Posterior vena cava (tissue), 2 donors: ENCODE measurements at regions of chr5 and their contacts with region 1.

Region 1: DNA sequence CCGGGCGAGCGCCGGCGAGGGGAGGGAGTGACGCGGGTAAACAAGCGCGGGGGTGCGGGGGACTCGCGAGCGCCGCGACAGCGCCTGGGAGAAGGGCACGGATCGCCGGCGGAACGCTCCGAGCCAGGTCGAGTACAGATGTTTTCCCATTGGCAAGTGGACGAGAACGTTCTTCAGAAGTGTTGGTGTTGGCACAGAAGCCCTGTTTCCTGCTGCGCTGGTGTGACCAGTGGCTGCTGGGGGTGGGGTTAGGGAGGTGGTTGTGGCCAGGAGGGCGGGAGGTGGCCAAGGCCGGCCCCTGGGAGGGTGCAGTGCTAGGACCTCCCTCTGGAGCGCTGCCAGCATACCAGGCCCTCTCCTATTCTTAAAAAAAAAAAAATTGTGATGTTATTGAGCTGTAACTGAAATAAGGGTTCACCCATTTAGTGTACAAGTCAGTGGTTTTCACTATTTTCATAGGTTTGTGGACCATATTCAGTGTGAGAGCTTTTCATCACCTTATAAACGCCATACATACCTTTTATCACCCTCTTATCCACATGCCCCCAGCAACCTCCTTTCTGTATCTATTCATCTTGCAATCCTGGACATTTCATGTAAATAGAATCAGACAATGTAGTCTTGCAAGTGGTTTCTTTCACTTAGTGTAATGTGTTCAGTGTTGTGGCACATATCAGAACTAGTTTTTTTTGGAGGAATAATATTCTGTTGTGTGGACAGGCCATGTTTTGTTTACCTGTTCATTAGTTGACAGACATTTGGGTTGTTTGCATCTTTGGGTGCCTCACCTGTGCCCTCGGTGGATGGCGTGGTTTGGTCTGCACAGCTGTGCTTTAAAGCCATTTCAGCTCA is 1.1 kb downstream of the SQSTM1 start:
- DNase-seq: peak; percentile 99

Region 2: GRCh38 chr5:179806250-179807222 is 15.3 kb before region 1 on chr5 and contains the start of gene MGAT4B:
- intact Hi-C with region 1: loop called in 1 of 2 experiments (anchors 2 kb)
- DNase-seq: peak; percentile 91
- total RNA-seq, gene MGAT4B: 54.6 to 62.8 TPM

Region 3: GRCh38 chr5:179839328-179840256 is 17.8 kb after region 1 on chr5:
- intact Hi-C with region 1: no loop called
- DNase-seq: peak; percentile 69

Region 4: GRCh38 chr5:179858586-179859427 is 37.0 kb after region 1 on chr5 and contains the start of gene MRNIP:
- intact Hi-C with region 1: no loop called
- DNase-seq: peak; percentile 100
- total RNA-seq, gene MRNIP: 17.3 to 20.1 TPM